ENCODE measurements at regions of chr2 and their contacts with region 1.

Region 1: DNA sequence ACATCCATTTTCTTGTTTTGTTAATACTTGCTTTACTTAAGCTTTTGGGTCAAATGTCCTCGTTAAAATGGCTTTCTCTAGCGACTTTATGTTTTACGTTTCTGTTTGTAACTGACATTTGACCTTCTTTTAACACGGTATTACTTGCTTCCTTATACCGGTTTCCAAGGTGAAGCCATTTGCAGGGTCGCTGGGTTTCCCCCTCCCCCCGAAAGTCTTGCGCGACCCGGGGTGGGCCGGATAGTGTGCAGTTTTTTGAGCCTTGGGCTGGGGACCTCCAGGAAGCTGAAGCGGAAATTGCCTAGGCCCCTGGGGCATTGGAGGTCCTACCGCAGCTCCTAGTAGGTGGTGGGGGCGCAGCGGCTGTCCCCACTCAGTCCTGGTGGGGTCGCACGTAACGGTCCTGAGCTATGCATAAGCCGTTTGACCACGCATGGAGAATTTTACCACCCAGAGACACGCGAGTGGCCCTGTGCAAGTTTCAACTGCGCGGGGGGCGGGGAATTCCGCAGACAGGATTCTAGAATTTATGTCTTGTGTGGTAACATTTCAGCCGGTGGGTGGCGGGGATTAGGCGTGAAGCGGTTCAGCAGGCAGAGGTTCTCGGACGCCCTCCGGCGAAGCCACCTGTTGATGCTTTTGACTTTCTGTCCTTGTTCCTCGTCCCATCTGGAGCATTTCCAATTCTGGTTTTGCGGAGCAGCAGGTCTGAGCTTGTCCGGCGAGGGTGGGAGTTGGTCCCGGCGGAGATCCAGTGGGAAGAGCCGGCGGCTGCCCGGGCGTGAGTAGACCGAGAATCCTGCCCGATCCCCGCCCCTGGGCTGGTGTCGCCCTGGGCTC is 2.4 kb downstream of the CFLAR start:
- DNase-seq: peak; percentile 91
- H3K4me3 ChIP-seq: peak overlapping the region; percentile 81
- H3K27ac ChIP-seq: peak overlapping the region; percentile 95
- H3K4me1 ChIP-seq: peaks cover 43% of the 10 kb centered on the region
- CTCF ChIP-seq: peak; percentile 85

Region 2: DNA sequence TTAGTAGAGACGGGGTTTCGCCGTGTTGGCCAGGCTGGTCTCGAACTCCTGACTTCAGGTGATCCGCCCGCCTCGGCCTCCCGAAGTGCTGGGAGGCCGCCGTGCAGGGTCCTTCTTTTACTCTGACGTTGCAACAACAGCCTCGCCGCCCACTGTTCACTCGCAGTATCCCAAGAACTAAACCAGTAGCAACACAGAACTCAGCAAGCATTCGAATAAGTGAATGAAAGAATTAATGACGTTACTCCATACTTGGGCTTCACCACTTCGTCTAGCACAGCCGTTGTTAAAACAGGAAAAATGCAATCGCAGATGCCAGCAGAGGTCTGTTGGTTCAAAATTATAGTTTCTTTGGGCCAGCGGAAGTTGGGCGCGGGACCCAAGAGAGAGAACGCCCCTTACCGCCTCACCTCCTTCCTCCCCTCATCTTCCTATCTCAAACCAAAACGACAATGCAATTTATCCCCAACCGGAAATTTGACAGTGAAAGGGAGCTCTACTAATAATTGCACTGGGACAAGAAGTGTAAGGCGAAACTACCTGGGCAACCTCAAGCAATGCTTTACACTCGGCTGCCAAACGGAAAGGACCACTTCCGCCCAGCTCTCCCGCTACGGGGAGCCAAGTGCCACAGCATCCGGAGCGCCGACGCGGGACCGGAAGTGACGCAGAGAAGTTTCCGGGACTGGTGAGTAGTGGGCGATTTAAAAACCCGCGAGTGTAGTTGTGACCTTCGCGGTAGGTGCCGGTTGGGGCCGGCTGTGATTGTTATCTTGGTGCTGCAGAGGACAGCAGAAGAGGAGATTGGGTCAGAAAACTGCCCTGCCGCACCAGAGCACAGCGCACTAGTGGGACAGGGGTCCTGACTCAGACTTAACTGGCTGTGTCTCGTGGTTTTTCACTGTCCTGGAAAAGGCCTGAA is 229.4 kb before region 1 on chr2 and contains the starts of genes NIF3L1 and PPIL3:
- CTCF ChIA-PET with region 1: no interaction called
- POLR2A ChIA-PET with region 1: interaction called, 8 read pairs
- intact Hi-C with region 1: loop called (anchors 2 kb)
- DNase-seq: peak; percentile 99
- H3K4me3 ChIP-seq: peak within 1 kb of the TSS; percentile 90
- H3K27ac ChIP-seq: peak within 1 kb of the TSS; percentile 98
- H3K4me1 ChIP-seq: peaks cover 52% of the 10 kb centered on the region
- CTCF ChIP-seq: peak; percentile 39; the same call in 1 of the 2 replicates
- total RNA-seq, gene NIF3L1: 37.5 and 68.4 TPM in 2 replicates
- total RNA-seq, gene PPIL3: 49.4 and 54.4 TPM in 2 replicates

Region 3: DNA sequence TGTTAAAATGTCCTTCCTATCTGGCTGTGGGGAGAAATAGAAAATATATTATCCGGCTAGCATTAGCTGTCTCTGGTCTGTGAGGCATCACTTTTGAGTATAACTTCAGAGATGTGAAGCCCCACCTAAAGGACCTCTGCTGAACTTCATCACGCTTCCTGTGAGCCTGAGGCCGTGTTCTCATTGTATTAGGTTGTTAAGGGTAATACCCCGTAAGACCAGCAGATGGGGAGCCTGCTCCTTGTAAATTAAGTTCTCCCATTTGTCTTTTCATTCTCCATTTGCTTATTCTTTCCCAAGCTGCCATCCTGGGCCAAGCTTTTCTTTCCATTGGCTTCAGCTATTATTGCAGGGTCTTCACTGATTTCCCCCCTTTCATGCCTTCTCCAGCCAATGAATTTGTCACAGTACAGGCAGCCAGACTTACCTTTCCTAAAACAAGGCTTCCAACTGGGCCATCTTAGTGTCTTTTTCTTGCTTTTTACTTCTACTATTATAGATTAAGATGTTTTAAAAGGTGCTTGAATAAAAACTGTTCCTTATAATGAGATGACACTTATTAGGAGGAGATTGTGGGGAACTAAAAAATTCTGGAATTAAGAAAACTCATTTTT is 216.8 kb before region 1 on chr2:
- CTCF ChIA-PET with region 1: no interaction called
- POLR2A ChIA-PET with region 1: no interaction called
- intact Hi-C with region 1: loop called (anchors 2 kb)
- DNase-seq: peak; percentile 92
- H3K4me3 ChIP-seq: no peak overlapping the region
- H3K27ac ChIP-seq: no peak overlapping the region
- H3K4me1 ChIP-seq: peaks cover 5% of the 10 kb centered on the region
- CTCF ChIP-seq: peak; percentile 95

Region 4: GRCh38 chr2:201071479-201072200 is 46.7 kb before region 1 on chr2 and contains the starts of genes HYCC2 and NDUFB3:
- CTCF ChIA-PET with region 1: interaction called, 5 read pairs
- POLR2A ChIA-PET with region 1: interaction called, 5 read pairs
- intact Hi-C with region 1: loop called (anchors 1 kb)
- DNase-seq: peak; percentile 96
- H3K4me3 ChIP-seq: peak within 1 kb of the TSS; percentile 74
- H3K27ac ChIP-seq: peak within 1 kb of the TSS; percentile 58
- H3K4me1 ChIP-seq: peaks cover 39% of the 10 kb centered on the region
- CTCF ChIP-seq: peak; percentile 53; the same call in 1 of the 2 replicates
- total RNA-seq, gene HYCC2: 8.6 and 8.8 TPM in 2 replicates
- total RNA-seq, gene NDUFB3: 90.5 and 134 TPM in 2 replicates

Region 5: GRCh38 chr2:201158111-201158929 is 40.0 kb after region 1 on chr2:
- CTCF ChIA-PET with region 1: interaction called, 14 read pairs
- POLR2A ChIA-PET with region 1: interaction called, 19 read pairs
- intact Hi-C with region 1: loop called (anchors 1 kb)
- DNase-seq: peak; percentile 83
- H3K4me3 ChIP-seq: peak overlapping the region; percentile 24
- H3K27ac ChIP-seq: peak overlapping the region; percentile 55
- H3K4me1 ChIP-seq: peaks cover 20% of the 10 kb centered on the region
- CTCF ChIP-seq: peak; percentile 87

Region 6: GRCh38 chr2:201432038-201432620 is 313.8 kb after region 1 on chr2:
- CTCF ChIA-PET with region 1: no interaction called
- POLR2A ChIA-PET with region 1: no interaction called
- intact Hi-C with region 1: no loop called
- DNase-seq: no peak
- H3K4me3 ChIP-seq: no peak overlapping the region
- H3K27ac ChIP-seq: no peak overlapping the region
- H3K4me1 ChIP-seq: no peaks in the 10 kb centered on the region
- CTCF ChIP-seq: no peak